ENCODE measurements at regions of chr2 and their contacts with region 1.

Region 1: GRCh38 chr2:200471324-200471848 is 38.5 kb downstream of the KCTD18 start:
- DNase-seq: no peak
- ATAC-seq: peak; percentile 50
- H3K4me3 Mint-ChIP-seq: no peak overlapping the region
- H3K27ac Mint-ChIP-seq: no peak overlapping the region
- H3K4me1 Mint-ChIP-seq: peaks cover 24% of the 10 kb centered on the region
- H3K27me3 Mint-ChIP-seq: no peaks in the 10 kb centered on the region
- CTCF ChIP-seq: no peak

Region 2: GRCh38 chr2:199979832-199980628 is 491.4 kb before region 1 on chr2:
- CTCF ChIA-PET with region 1: interaction called, 16 read pairs
- POLR2A ChIA-PET with region 1: no interaction called
- intact Hi-C with region 1: loop called (anchors 1 kb)
- DNase-seq: peak; percentile 51
- ATAC-seq: no peak
- H3K4me3 Mint-ChIP-seq: no peak overlapping the region
- H3K27ac Mint-ChIP-seq: no peak overlapping the region
- H3K4me1 Mint-ChIP-seq: peaks cover 3% of the 10 kb centered on the region
- H3K27me3 Mint-ChIP-seq: no peaks in the 10 kb centered on the region
- CTCF ChIP-seq: peak; percentile 60

Region 3: DNA sequence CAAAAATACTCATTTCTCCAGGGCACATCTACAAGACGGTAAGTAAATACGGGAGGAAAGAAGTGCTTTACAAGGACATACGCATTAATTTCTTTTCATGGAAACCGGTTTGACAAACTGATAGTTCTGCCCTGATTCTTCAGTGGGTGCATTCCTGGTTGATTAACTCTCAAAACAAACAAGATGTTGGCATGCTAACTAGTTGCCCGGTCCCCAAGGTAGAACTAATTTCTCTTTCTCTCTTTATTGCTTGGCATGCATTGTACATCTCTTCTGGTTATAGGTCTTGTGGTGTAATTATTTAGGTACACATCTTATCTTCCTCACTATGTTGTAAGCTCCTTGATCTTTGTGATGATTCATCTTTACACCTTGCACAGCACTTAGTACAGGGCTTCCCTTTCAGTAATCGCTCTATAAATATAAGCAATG is 211.8 kb before region 1 on chr2:
- CTCF ChIA-PET with region 1: no interaction called
- POLR2A ChIA-PET with region 1: no interaction called
- intact Hi-C with region 1: no loop called
- DNase-seq: no peak
- ATAC-seq: no peak
- H3K4me3 Mint-ChIP-seq: no peak overlapping the region
- H3K27ac Mint-ChIP-seq: no peak overlapping the region
- H3K4me1 Mint-ChIP-seq: no peaks in the 10 kb centered on the region
- H3K27me3 Mint-ChIP-seq: peaks cover 3% of the 10 kb centered on the region
- CTCF ChIP-seq: no peak

Region 4: DNA sequence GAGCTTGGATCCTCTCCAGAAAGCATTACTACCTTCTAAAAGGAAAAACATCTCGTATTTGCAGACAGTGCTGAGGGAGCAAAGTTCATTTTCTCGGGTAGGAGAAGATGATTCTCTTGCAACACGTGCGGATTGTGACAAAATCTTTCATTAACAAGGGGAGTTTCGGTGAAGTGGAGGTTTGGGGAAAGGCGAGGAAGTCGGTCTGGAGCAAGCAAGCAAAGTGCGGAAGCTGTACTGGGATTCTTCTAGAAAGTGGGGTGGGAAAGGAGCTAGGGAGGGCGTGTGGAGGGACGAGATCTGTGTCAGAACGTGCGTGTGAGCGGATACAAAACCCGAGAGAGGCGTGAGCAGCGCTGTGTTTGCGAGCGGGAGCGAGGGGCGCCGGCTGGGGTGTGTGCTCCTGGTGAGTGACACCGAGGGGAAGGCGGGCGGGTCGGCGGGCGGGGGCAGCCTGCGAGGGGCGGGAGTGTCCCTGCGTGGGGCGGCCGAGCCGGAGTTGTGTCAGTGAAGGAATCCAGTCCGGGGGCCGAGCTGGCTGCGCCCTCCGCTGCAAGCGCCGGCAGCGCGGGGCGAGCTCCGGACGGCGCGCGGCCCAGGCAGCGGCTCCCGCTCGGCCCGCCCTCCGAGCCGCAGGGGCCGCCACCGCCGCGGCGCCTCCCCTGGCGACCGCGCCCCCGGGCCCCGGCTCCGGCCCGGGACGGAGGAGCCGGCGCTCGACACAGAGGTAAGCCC is 165.0 kb before region 1 on chr2 and contains the start of gene SPATS2L:
- CTCF ChIA-PET with region 1: no interaction called
- POLR2A ChIA-PET with region 1: no interaction called
- intact Hi-C with region 1: loop called (anchors 5 kb)
- DNase-seq: peak; percentile 22
- ATAC-seq: peak; percentile 53
- H3K4me3 Mint-ChIP-seq: peak within 1 kb of the TSS; percentile 80
- H3K27ac Mint-ChIP-seq: no peak within 1 kb of the TSS
- H3K4me1 Mint-ChIP-seq: peaks cover 12% of the 10 kb centered on the region
- H3K27me3 Mint-ChIP-seq: peaks cover 43% of the 10 kb centered on the region
- CTCF ChIP-seq: no peak
- total RNA-seq, gene SPATS2L: 0.64 and 0.86 TPM in 2 replicates

Region 5: DNA sequence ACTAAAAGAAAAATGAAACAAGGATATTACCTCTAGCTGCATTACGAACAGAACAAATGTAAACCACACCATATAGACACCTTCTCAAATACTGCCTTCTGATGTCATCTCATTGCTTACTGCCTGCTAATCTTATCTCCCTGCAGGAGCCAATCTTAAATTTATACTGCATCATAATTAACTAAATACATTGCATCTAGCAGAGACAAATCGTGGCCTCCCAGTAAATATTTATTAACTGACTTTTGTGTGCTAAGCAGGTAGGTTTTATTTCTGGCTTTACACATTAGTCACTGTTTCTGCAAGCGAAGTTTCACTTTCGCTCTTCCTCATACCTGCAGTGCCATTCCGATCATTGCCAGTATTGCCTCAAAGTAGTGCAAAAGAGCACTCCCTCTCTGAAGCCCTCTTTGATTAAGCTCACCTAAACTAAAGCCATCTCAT is 97.4 kb before region 1 on chr2:
- CTCF ChIA-PET with region 1: no interaction called
- POLR2A ChIA-PET with region 1: no interaction called
- intact Hi-C with region 1: loop called (anchors 5 kb)
- DNase-seq: no peak
- ATAC-seq: peak; percentile 92
- H3K4me3 Mint-ChIP-seq: peak overlapping the region; percentile 76
- H3K27ac Mint-ChIP-seq: no peak overlapping the region
- H3K4me1 Mint-ChIP-seq: peaks cover 14% of the 10 kb centered on the region
- H3K27me3 Mint-ChIP-seq: peaks cover 5% of the 10 kb centered on the region
- CTCF ChIP-seq: no peak

Region 6: DNA sequence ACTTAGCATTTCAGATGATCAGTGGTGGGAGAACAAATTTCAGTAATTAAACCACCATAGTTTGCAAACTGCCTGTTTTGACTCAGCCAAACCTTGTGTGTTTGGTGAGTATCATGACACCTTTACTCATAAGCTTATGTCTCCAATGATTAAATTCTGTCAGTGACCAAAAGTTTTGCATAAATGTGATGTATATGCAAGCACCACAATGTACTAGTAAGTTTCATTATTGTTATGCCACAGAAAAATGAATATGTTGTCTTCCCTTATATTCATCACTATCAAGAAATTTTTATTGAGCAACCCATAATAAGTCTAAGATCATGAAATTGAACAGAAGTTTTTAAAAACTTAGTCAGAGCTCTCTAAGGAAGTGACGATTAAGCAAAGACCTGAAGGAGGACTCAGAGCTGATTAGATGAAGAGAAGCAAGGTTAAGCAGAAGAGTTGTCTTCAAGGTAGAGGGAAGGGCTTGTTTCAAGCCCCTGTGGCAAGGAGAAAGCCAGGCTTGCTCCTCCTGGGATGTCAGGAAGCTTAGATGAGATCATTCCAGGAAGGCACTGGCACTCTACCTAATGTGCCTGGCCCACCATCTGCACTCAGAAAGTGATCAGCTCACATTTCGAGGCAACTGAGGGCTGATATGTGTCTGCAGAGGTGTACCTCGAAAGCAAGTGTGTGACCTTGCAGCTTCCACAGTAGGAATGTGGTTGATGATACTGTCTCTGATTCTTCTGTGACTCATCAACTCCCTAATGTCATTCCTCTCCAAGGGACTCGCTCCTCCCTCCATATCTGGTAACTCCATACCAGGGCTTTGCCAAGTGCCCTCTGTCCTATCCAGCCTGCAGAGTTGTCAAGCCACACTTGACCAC is 16.2 kb before region 1 on chr2:
- CTCF ChIA-PET with region 1: no interaction called
- POLR2A ChIA-PET with region 1: interaction called, 5 read pairs
- intact Hi-C with region 1: loop called (anchors 1 kb)
- DNase-seq: no peak
- ATAC-seq: no peak
- H3K4me3 Mint-ChIP-seq: no peak overlapping the region
- H3K27ac Mint-ChIP-seq: peak overlapping the region; percentile 60
- H3K4me1 Mint-ChIP-seq: peaks cover 49% of the 10 kb centered on the region
- H3K27me3 Mint-ChIP-seq: no peaks in the 10 kb centered on the region
- CTCF ChIP-seq: no peak

Region 7: DNA sequence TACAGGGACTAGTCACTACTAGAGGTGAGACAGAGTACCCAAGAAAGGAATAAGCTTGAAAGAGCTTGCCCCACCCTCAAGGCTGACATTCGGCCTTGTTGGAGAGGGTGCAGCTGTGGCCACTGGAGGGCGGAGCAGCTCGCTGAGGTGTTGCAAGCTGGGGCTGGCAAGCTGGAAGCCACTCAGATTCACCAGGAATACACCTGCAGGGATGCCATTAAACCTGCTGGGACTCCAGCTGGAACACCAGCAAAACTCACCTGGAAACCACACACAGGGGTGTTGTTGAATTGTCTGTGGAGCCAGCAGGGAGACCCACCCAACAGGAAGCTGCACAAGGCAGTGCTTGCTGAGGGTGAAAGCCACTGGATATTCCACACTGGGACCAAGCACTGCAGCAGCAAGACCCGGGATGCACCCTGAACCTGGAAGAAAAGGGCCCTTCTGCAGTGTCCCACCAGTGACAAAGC is 12.4 kb after region 1 on chr2:
- CTCF ChIA-PET with region 1: interaction called, 13 read pairs
- POLR2A ChIA-PET with region 1: no interaction called
- intact Hi-C with region 1: no loop called
- DNase-seq: no peak
- ATAC-seq: no peak
- H3K4me3 Mint-ChIP-seq: no peak overlapping the region
- H3K27ac Mint-ChIP-seq: no peak overlapping the region
- H3K4me1 Mint-ChIP-seq: no peaks in the 10 kb centered on the region
- H3K27me3 Mint-ChIP-seq: peaks cover 8% of the 10 kb centered on the region
- CTCF ChIP-seq: no peak